ENCODE measurements at regions of chr6 and their contacts with region 1.

Region 1: GRCh38 chr6:144075187-144075586 is 20.2 kb downstream of the SF3B5 start:
- DNase-seq: no peak
- ATAC-seq: peak; percentile 92
- H3K4me3 ChIP-seq: no peak overlapping the region; the same call in 1 of the 2 replicates
- H3K27ac ChIP-seq: peak overlapping the region; percentile 68
- H3K4me1 ChIP-seq: peaks cover 15% of the 10 kb centered on the region
- H3K27me3 ChIP-seq: no peaks in the 10 kb centered on the region
- CTCF ChIP-seq: no peak
- EP300 ChIP-seq: no peak
- POLR2A ChIP-seq: no peak
- RAD21 ChIP-seq: no peak

Region 2: DNA sequence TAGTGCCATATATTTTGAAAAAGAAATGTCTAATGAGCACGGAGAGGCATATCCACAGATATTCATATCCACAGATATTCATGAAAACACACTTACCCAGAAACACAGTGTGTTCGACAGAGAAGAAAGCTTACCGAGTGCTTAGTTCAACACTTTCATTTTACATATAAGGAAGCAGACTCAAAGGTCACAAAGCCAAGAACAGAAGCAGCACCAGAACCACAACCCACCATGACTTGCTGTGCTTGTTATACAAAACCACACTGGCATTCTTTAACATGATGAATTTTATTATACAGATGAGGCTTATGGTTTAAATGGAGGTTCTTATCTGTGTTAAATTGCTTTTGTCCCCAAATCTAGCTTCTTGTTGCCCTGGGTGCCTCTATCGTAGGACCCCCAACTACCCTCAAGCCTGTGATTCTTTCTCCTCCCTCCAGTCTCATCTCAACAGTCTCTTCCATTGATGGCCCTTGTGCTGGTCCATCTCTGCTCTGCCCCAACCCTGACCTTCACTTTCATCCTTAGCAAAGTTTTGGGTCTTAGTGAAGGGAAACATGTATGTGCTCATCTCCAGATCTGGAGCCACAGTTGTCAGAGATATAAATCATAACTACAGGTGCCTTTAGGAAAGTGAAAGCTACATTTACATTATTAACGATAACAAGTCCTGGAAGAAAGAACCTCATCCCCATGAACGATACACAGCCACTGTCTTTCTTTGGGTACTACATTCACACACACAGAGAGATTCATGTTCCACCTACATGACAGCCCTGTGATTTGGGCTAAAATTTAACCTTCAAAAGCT is 19.9 kb before region 1 on chr6:
- CTCF ChIA-PET with region 1: interaction called, 3 read pairs
- POLR2A ChIA-PET with region 1: interaction called, 21 read pairs
- RAD21 ChIA-PET with region 1: interaction called, 4 read pairs
- SMC1A ChIA-PET with region 1: interaction called, 14 read pairs
- in situ Hi-C with region 1: no loop called
- intact Hi-C with region 1: no loop called
- DNase-seq: no peak
- ATAC-seq: peak; percentile 93
- H3K4me3 ChIP-seq: peak overlapping the region; percentile 69
- H3K27ac ChIP-seq: peak overlapping the region; percentile 84
- H3K4me1 ChIP-seq: peaks cover 5% of the 10 kb centered on the region
- H3K27me3 ChIP-seq: no peaks in the 10 kb centered on the region
- CTCF ChIP-seq: no peak
- EP300 ChIP-seq: no peak
- POLR2A ChIP-seq: no peak
- RAD21 ChIP-seq: no peak

Region 3: GRCh38 chr6:144063744-144064401 is 11.3 kb before region 1 on chr6:
- CTCF ChIA-PET with region 1: interaction called, 10 read pairs
- POLR2A ChIA-PET with region 1: interaction called, 47 read pairs
- RAD21 ChIA-PET with region 1: interaction called, 36 read pairs
- SMC1A ChIA-PET with region 1: interaction called, 40 read pairs
- in situ Hi-C with region 1: no loop called
- intact Hi-C with region 1: no loop called
- DNase-seq: peak; percentile 59
- ATAC-seq: peak; percentile 90
- H3K4me3 ChIP-seq: peak overlapping the region; percentile 85
- H3K27ac ChIP-seq: peak overlapping the region; percentile 94
- H3K4me1 ChIP-seq: peaks cover 10% of the 10 kb centered on the region
- H3K27me3 ChIP-seq: no peaks in the 10 kb centered on the region
- CTCF ChIP-seq: peak; percentile 13 to 41 (median 16); a peak in 3 of 6 replicates
- EP300 ChIP-seq: no peak
- POLR2A ChIP-seq: peak; percentile 97
- RAD21 ChIP-seq: no peak